ENCODE measurements at regions of chr19 and their contacts with region 1.

Region 1: DNA sequence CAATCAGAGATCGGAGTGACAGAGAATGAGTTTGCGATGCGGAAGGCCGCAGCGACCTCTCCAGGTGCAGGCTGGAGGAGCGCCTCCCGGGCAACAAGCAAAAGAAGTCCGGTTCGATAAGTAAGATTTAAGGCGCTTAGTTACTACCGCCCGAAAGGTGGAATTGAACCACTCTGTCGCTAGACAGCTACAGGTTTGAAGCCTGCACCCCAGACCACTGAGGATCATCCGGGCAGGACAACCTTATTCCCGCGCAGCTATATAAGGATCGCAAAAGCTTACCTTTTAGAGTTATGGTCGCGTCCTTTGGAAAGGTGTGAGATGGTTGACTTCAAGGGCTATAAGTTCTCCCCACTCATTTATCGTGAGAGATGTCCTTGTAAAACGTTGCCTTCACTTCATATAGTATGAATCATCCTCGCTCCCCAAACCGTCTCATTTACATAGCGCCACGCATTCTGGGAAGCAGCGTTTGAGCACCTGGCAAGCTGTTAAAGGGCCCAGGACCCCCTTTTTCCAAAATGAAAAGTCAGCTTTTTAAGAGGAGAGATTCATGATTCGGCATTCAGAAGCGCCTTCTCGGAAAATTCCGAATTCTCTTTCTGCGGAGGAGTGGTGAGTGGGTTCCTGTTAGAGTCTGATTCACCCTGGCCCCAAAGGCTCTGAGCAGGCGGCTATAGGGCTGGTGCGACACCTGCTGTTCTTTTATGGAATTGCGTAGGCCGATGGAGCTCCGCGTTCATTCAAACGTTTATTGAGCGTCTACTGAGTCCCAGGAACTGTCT is 10.8 kb downstream of the FOSB start:
- DNase-seq: peak; percentile 89
- H3K4me3 ChIP-seq: peak overlapping the region; percentile 87
- H3K27ac ChIP-seq: peak overlapping the region; percentile 98
- H3K4me1 ChIP-seq: peaks cover 5% of the 10 kb centered on the region; the same call in 1 of the 2 replicates
- H3K27me3 ChIP-seq: no peaks in the 10 kb centered on the region

Region 2: DNA sequence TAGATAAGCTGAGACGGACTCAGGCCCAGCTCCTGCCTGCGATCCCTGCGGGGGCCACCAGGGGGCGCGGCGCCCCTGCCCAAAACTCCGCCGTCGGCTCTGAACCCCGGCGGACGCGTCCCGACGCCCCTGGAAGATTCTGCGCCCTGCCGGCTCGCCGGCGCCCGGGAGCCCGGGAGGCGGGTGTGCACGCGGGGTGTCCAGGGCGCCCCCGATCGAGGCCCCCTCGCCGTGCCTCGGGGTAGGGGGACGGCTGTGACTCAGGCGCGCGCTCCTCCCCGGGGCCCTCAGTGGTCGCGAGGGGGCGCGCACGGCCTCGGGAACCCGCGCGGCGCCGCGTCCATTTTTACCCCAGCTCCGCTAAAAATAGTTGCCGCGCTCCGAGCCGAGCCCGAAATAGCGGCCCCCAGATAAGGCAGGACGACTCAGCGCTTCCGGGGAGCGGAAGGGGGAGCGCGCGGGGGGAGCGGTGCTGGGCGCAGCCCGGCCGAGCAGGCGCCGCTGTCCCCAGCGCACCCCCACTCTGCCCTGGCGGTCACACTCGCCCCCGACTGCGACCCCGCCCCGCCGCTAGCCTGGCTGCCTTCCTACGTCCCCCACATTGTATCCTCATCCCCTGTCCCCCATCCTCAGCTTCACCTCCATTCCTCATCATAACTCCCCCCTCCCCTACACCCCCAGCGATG is 38.9 kb before region 1 on chr19:
- in situ Hi-C with region 1: loop called (anchors 5 kb)
- DNase-seq: peak; percentile 92
- H3K4me3 ChIP-seq: peak overlapping the region; percentile 81
- H3K27ac ChIP-seq: peak overlapping the region; percentile 76
- H3K4me1 ChIP-seq: peaks cover 11% of the 10 kb centered on the region
- H3K27me3 ChIP-seq: no peaks in the 10 kb centered on the region

Region 3: GRCh38 chr19:45547976-45548609 is 69.4 kb after region 1 on chr19:
- in situ Hi-C with region 1: no loop called
- DNase-seq: peak; percentile 86
- H3K4me3 ChIP-seq: no peak overlapping the region
- H3K27ac ChIP-seq: no peak overlapping the region
- H3K4me1 ChIP-seq: peaks cover 14% of the 10 kb centered on the region
- H3K27me3 ChIP-seq: no peaks in the 10 kb centered on the region